Posterior vena cava (tissue), 2 donors: ENCODE measurements at regions of chr10 and their contacts with region 1.

Region 1: GRCh38 chr10:79195091-79195923 is 126.5 kb downstream of the ZMIZ1 start:
- DNase-seq: peak; percentile 95

Region 2: DNA sequence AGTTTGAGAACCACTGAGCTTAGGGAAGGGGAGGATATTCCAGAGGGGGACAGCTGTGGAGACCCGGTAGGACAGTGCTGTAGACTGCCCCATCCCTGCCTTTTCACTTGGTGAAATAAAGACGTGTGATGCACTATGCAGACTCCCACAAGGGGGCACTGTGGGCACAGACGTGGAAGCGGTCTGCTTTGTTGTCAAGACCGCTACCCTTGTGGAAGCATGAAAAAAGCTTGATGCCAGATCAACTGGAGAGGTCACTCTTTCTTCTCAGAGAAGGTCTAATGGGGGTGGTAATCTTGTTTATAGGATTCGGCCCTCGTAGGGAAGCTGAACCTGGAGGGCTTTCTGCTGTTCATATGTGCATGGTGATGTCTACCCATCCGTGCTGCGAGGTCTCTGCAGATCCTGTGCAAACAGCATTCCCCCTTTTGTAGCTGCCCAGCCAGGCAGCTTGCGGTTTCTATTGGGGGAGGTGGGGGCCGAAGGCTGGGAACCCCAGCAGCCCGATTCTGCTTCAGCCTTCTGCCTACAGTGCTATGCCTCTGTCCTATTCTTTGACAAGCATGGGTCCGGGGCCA is 1147.9 kb before region 1 on chr10:
- intact Hi-C with region 1: loop called (anchors 5 kb)
- DNase-seq: peak; percentile 96

Region 3: DNA sequence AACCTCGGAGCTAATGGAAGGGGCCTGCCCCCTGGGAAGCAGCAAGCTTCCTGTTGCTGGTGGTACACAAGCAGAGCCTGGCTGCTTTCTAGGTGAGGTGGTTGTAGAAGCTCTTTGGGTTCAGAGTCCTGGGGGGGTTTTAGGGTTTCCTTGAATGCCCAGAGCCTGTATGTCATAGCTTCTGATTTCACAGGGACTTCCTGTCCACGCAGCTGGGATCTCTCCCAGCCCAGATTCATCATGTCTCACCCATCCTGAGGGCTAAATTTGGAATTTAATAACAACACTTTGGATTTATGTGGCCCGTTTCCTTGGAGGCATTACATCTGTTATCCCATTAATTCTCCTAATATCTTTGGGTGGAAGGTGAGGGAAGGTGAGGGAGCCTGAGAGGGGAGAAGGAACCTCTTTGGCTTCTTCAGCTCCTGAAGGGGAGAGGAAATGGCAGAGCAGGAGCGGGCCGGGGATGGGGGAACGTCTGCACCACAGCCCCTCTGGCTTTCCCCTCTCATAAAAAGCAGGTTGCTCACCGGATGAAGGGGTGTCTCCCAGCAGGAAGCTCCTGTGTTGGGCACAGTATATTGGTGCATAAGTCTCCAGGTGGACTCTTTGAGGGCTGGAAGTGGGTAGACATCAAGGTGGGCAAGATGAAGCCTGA is 1142.0 kb before region 1 on chr10:
- intact Hi-C with region 1: loop called (anchors 5 kb)
- DNase-seq: peak; percentile 73

Region 4: DNA sequence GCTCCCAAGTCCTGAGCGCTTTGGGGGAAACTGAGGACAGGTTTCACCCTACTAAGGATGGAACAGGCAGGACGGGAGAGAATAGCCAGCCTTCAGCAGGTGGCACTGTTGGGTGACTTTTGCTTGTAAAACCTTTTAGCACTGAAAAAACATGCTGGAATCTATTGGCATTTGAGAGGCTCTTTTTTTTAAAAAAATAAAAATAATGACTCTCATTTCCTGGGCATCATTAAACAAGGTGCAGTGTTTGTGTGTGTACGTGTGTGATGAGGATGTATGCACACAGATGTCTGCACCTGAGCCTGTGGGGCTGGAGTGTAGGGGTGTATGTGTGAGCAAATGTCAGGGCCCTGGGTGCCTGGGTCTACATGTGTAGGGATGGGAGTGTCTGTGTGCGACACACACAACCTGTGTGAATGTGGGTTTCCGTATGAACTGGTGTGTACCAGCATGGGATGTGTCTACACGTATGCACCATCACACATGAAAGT is 983.7 kb before region 1 on chr10:
- intact Hi-C with region 1: loop called (anchors 5 to 10 kb)
- DNase-seq: peak; percentile 67

Region 5: DNA sequence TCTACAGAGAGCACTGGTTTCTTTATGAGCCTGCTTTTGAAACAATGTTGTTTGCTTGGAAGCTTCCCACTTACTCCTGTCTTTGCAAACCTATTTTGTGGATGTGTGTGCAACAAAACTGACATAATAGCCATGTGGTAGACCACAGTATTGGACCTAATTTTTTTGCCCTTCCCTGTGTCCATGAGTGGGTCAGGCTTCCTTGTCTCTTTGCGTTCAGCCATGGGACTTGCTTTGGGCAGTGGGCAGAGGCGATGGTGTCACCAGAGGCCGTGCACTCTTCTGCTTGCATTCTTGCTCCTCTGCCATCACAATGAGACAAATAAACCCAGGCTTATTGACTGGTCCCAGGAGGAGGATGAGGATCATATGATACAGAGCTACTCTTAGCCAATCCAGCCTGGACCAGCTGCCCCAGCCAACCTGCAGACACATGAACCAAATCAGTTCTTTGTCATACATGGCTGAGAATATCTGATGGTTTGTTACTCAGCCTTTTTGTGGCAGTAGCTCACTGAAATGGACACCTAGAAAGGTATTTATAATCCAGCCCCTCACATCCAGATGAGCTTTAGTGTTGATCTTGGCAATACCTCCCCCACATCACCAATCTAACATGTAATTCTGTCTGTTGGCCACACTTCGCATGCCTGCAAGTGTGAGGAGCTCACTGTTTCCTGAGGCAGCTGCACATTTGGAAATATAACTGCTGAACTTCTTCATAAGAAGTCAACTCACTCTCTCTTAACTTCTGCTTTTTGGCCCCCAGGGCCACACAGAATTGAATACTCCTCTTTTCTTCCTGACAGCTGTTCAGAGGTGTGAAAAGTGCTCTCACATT is 554.3 kb before region 1 on chr10:
- intact Hi-C with region 1: loop called in 1 of 2 experiments (anchors 10 kb)
- DNase-seq: no peak

Region 6: GRCh38 chr10:79068562-79069324 is 126.6 kb before region 1 on chr10 and contains the start of gene ZMIZ1:
- intact Hi-C with region 1: loop called (anchors 2 to 10 kb)
- DNase-seq: peak; percentile 97
- total RNA-seq, gene ZMIZ1: 61.5 to 62.6 TPM